ENCODE measurements at regions of chr19 and their contacts with region 1.

Region 1: DNA sequence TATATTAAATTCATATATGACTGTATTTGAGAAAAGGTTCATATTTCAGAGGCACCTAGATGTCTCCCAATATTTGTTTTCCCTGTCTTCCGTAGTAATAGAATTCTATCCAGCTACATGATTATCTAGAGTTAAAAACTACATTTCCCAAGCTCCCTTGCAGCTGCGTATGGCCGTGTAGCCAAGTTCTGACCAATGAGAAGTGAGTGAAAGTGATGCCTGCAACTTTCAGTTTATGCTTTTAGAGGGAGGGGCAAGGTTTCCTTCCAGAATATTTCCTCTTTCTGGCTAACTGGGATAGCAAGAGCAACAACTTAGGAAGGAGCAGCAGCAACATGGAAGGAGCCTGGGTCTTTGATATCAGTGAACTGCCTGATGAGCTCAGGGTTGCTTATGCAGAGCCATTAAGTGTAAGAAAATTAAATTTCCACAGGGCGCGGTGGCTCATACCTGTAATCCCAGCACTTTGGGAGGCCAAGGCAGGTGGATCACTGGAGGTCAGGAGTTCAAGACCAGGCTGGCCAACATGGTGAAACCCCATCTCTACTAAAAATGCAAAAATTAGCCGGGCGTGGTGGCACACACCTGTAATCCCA is 23.2 kb upstream of the CYP2A13 start:
- DNase-seq: peak in 1 of 2 donors; percentile 10
- ATAC-seq: no peak
- H3K4me3 ChIP-seq: no peak overlapping the region
- H3K4me3 Mint-ChIP-seq: no peak overlapping the region
- H3K27ac ChIP-seq: no peak overlapping the region
- H3K27ac Mint-ChIP-seq: no peak overlapping the region
- H3K4me1 ChIP-seq: no peaks in the 10 kb centered on the region
- H3K4me1 Mint-ChIP-seq: peaks cover 0 to 4% of the 10 kb centered on the region in 2 donors
- H3K27me3 ChIP-seq: peaks cover 2% of the 10 kb centered on the region
- H3K27me3 Mint-ChIP-seq: peaks cover 25 to 36% of the 10 kb centered on the region in 2 donors
- CTCF ChIP-seq: no peak

Region 2: GRCh38 chr19:40893112-40893511 is 172.0 kb before region 1 on chr19:
- intact Hi-C with region 1: loop called (anchors 5 kb)
- DNase-seq: no peak
- ATAC-seq: no peak
- H3K4me3 ChIP-seq: no peak overlapping the region
- H3K4me3 Mint-ChIP-seq: no peak overlapping the region
- H3K27ac ChIP-seq: no peak overlapping the region
- H3K27ac Mint-ChIP-seq: no peak overlapping the region
- H3K4me1 ChIP-seq: no peaks in the 10 kb centered on the region
- H3K4me1 Mint-ChIP-seq: no peaks in the 10 kb centered on the region
- H3K27me3 ChIP-seq: peaks cover 2% of the 10 kb centered on the region
- H3K27me3 Mint-ChIP-seq: peaks cover 36 to 42% of the 10 kb centered on the region in 2 donors
- CTCF ChIP-seq: no peak